ENCODE measurements at regions of chr11 and their contacts with region 1.

Region 1: GRCh38 chr11:18526521-18527296 is at the start of gene TSG101:
- DNase-seq: peak; percentile 98
- ATAC-seq: peak; percentile 82
- H3K4me3 ChIP-seq: peak within 1 kb of the TSS; percentile 82 to 94 (median 84)
- H3K4me3 Mint-ChIP-seq: peak within 1 kb of the TSS; percentile 100
- H3K27ac ChIP-seq: peak within 1 kb of the TSS; percentile 97 to 99
- H3K27ac Mint-ChIP-seq: peak within 1 kb of the TSS; percentile 99
- H3K4me1 ChIP-seq: peaks cover 14% of the 10 kb centered on the region in 2 donors
- H3K4me1 Mint-ChIP-seq: peaks cover 45% of the 10 kb centered on the region
- H3K27me3 ChIP-seq: no peaks in the 10 kb centered on the region
- H3K27me3 Mint-ChIP-seq: no peaks in the 10 kb centered on the region
- CTCF ChIP-seq: no peak
- total RNA-seq, gene TSG101: 49.6 and 50.9 TPM in 2 replicates

Region 2: GRCh38 chr11:18012863-18013781 is 513.6 kb before region 1 on chr11 and contains the start of gene SERGEF:
- CTCF ChIA-PET with region 1: no interaction called
- POLR2A ChIA-PET with region 1: no interaction called
- intact Hi-C with region 1: loop called (anchors 1 kb)
- DNase-seq: peak; percentile 95
- ATAC-seq: peak; percentile 90
- H3K4me3 ChIP-seq: peak within 1 kb of the TSS; percentile 77 to 90 (median 83)
- H3K4me3 Mint-ChIP-seq: peak within 1 kb of the TSS; percentile 100
- H3K27ac ChIP-seq: peak within 1 kb of the TSS; percentile 61 to 65
- H3K27ac Mint-ChIP-seq: peak within 1 kb of the TSS; percentile 99
- H3K4me1 ChIP-seq: peaks cover 9 to 21% of the 10 kb centered on the region in 2 donors
- H3K4me1 Mint-ChIP-seq: peaks cover 27% of the 10 kb centered on the region
- H3K27me3 ChIP-seq: no peaks in the 10 kb centered on the region
- H3K27me3 Mint-ChIP-seq: no peaks in the 10 kb centered on the region
- CTCF ChIP-seq: no peak
- total RNA-seq, gene SERGEF: 52.5 and 54.3 TPM in 2 replicates

Region 3: DNA sequence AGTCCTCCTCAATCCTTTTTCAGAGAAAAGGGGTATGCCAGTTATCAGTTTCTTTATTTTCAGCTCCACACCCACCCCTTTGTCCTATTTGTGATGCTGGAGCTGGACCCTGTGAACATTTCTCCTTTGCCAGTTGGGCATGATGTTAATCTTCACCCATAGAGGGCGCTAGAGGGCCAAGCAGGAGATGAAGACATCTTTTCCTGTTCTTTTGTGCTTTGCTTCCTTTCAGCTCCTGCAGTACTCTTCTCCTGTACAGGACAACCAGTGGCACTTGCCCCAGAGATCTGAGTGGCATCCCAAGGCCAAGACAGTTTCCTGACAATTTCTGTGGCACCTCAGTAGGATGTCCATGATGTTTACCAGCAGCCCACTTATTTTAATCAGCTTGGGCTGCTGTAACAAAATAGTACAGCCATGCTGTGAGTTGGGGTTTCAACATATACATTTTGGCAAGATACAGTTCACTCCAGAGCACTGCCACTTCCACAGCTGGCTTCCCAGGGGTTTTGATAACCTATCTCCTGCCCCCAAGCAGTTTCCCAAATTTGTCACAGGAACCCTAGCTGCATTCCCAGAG is 282.8 kb before region 1 on chr11:
- CTCF ChIA-PET with region 1: no interaction called
- POLR2A ChIA-PET with region 1: no interaction called
- intact Hi-C with region 1: loop called (anchors 10 kb)
- DNase-seq: peak; percentile 77
- ATAC-seq: no peak
- H3K4me3 ChIP-seq: no peak overlapping the region
- H3K4me3 Mint-ChIP-seq: no peak overlapping the region
- H3K27ac ChIP-seq: no peak overlapping the region
- H3K27ac Mint-ChIP-seq: peak overlapping the region; percentile 12
- H3K4me1 ChIP-seq: peaks cover 2 to 19% of the 10 kb centered on the region in 2 donors
- H3K4me1 Mint-ChIP-seq: peaks cover 15% of the 10 kb centered on the region
- H3K27me3 ChIP-seq: peaks cover 0 to 7% (median 6%) of the 10 kb centered on the region in 4 experiments
- H3K27me3 Mint-ChIP-seq: peaks cover 14% of the 10 kb centered on the region
- CTCF ChIP-seq: peak; percentile 90

Region 4: GRCh38 chr11:18615628-18616392 is 89.1 kb after region 1 on chr11:
- CTCF ChIA-PET with region 1: no interaction called
- POLR2A ChIA-PET with region 1: no interaction called
- intact Hi-C with region 1: no loop called
- DNase-seq: peak; percentile 11
- ATAC-seq: no peak
- H3K4me3 ChIP-seq: no peak overlapping the region
- H3K4me3 Mint-ChIP-seq: no peak overlapping the region
- H3K27ac ChIP-seq: no peak overlapping the region
- H3K27ac Mint-ChIP-seq: no peak overlapping the region
- H3K4me1 ChIP-seq: peaks cover 5 to 7% of the 10 kb centered on the region in 2 donors
- H3K4me1 Mint-ChIP-seq: peaks cover 24% of the 10 kb centered on the region
- H3K27me3 ChIP-seq: no peaks in the 10 kb centered on the region
- H3K27me3 Mint-ChIP-seq: no peaks in the 10 kb centered on the region
- CTCF ChIP-seq: no peak

Region 5: DNA sequence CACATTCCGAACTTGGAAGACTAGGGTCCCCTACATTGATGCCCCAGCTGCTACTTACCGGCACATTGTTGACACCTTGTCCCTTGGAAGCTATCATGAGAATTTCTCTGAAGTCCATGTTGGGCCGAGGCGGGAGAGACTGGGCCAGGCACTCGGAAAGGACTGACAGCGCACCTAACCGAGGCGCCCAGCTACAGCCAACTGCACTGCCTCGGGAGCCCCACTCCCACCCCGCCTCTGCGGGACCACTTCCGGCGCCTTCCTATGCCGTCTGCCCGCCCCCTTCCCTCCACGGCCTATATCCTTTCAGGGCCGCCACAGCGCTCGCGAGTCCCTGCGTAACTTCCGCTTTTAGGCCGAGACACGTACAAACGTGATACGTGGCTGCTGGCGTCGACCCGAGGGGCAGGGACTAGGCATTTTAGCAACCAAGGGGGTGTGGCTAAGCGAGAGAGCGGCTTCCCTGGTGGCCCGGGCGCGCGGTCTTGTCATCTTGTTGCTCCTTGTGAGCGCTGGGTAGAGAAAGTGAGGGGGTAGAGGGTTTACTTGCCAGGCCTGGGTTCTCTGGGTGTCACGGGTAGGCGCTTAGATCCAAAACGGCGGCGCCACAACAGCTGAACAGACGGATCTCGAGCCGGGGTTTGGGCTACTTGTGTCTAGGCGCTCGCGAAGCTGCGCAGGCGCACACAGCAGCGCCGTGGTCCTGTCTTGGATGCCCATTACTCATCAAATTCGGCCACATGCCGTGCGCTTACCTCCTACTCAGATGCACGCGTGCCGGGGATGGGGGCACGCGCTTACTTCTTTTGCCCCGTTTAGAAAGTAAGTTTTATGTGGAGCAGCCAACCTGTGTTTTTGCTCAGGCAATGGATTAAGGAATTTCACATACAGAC is 107.7 kb after region 1 on chr11 and contains the start of gene SPTY2D1:
- CTCF ChIA-PET with region 1: interaction called, 4 read pairs
- POLR2A ChIA-PET with region 1: interaction called, 4 read pairs
- intact Hi-C with region 1: loop called (anchors 1 kb)
- DNase-seq: peak; percentile 98
- ATAC-seq: peak; percentile 95
- H3K4me3 ChIP-seq: peak within 1 kb of the TSS; percentile 64 to 95 (median 91)
- H3K4me3 Mint-ChIP-seq: peak within 1 kb of the TSS; percentile 99
- H3K27ac ChIP-seq: peak within 1 kb of the TSS; percentile 75 to 97
- H3K27ac Mint-ChIP-seq: peak within 1 kb of the TSS; percentile 98
- H3K4me1 ChIP-seq: peaks cover 14 to 16% of the 10 kb centered on the region in 2 donors
- H3K4me1 Mint-ChIP-seq: peaks cover 23% of the 10 kb centered on the region
- H3K27me3 ChIP-seq: no peaks in the 10 kb centered on the region
- H3K27me3 Mint-ChIP-seq: peaks cover 8% of the 10 kb centered on the region
- CTCF ChIP-seq: no peak
- total RNA-seq, gene SPTY2D1: 16.5 and 17.8 TPM in 2 replicates

Region 6: GRCh38 chr11:18721561-18722292 is 195.0 kb after region 1 on chr11:
- CTCF ChIA-PET with region 1: interaction called, 3 read pairs
- POLR2A ChIA-PET with region 1: interaction called, 4 read pairs
- intact Hi-C with region 1: loop called (anchors 1 kb)
- DNase-seq: peak; percentile 77
- ATAC-seq: peak; percentile 66
- H3K4me3 ChIP-seq: peak overlapping the region; percentile 24 to 80 (median 69)
- H3K4me3 Mint-ChIP-seq: peak overlapping the region; percentile 92
- H3K27ac ChIP-seq: peak overlapping the region in 1 of 2 donors; percentile 11
- H3K27ac Mint-ChIP-seq: peak overlapping the region; percentile 42
- H3K4me1 ChIP-seq: peaks cover 9 to 17% of the 10 kb centered on the region in 2 donors
- H3K4me1 Mint-ChIP-seq: peaks cover 9% of the 10 kb centered on the region
- H3K27me3 ChIP-seq: no peaks in the 10 kb centered on the region
- H3K27me3 Mint-ChIP-seq: peaks cover 6% of the 10 kb centered on the region
- CTCF ChIP-seq: peak; percentile 88

Region 7: DNA sequence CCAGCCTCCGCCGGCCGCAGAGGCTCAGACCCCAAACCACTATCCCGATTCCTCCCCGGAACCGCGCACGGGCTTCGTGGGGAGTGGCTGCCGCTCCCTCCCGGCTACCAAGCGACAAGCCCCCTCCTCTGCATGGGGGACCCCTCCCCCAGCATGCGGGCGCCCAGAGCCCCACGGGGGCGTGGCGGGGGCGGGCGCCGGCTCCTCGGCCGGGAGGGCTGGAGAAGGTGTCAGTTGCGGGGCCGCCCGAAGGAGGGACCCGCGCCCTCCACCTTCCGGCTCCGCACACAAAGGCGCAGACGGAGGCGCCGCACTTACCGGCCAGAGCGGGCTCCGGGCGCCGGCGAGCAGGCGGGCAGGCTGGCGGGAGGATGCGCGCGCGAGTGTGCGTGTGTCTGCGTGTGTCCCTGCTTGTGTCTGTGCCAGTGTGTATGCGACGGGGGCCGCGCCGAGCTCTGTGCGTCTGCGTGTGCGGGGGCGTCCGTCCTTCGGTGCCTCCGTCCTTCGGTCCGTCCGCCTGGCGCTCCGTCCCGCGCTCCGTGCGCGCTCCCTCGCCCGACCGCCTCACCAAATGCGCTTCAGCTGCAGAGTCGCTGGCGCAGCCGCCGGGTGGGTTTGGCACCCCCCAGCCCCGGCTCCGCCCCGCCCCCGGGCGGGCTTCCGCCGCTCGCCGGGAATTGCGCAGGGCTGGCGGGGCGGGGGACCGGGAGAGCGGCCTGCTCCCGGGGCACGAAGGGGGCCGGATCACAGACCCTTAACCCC is 264.7 kb after region 1 on chr11 and contains the start of gene PTPN5:
- CTCF ChIA-PET with region 1: no interaction called
- POLR2A ChIA-PET with region 1: no interaction called
- intact Hi-C with region 1: no loop called
- DNase-seq: no peak
- ATAC-seq: no peak
- H3K4me3 ChIP-seq: no peak within 1 kb of the TSS
- H3K4me3 Mint-ChIP-seq: no peak within 1 kb of the TSS
- H3K27ac ChIP-seq: no peak within 1 kb of the TSS
- H3K27ac Mint-ChIP-seq: no peak within 1 kb of the TSS
- H3K4me1 ChIP-seq: peaks cover 0 to 3% of the 10 kb centered on the region in 2 donors
- H3K4me1 Mint-ChIP-seq: peaks cover 8% of the 10 kb centered on the region
- H3K27me3 ChIP-seq: peaks cover 0 to 37% (median 7%) of the 10 kb centered on the region in 4 experiments
- H3K27me3 Mint-ChIP-seq: peaks cover 56% of the 10 kb centered on the region
- CTCF ChIP-seq: no peak
- total RNA-seq, gene PTPN5: not detected in 2 replicates